Keratinocyte (primary cell): ENCODE measurements at regions of chr18 and their contacts with region 1.

Region 1: DNA sequence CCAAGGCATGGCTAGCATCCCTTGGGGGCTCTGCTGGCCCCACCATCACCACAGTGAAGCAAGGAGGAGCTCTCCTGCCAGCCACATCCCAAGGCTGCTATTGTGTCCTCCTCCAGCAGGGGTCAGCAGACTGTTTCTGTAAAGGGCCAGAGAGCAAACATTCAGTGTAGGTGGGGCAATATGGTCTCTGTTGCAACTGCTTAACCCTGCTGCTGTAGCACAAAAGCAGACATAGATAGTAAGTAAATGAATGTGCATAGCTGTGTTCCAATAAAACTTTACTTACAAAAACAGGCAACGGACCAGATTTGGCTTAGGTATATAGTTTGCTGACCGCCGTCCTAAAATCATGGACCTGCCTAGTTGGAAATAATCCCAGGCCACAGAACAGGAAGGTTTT is 36.4 kb upstream of the ZBTB7C start:
- DNase-seq: no peak
- H3K4me3 ChIP-seq: no peak overlapping the region
- H3K27ac ChIP-seq: no peak overlapping the region
- H3K4me1 ChIP-seq: no peaks in the 10 kb centered on the region
- H3K27me3 ChIP-seq: peaks cover 16% of the 10 kb centered on the region
- CTCF ChIP-seq: peak; percentile 96 to 98 (median 97)

Region 2: GRCh38 chr18:48230467-48231113 is 214.9 kb before region 1 on chr18:
- dilution Hi-C with region 1: loop called (anchors 25 kb)
- DNase-seq: no peak
- H3K4me3 ChIP-seq: no peak overlapping the region
- H3K27ac ChIP-seq: no peak overlapping the region
- H3K4me1 ChIP-seq: peaks cover 4% of the 10 kb centered on the region
- H3K27me3 ChIP-seq: peaks cover 3% of the 10 kb centered on the region
- CTCF ChIP-seq: peak; percentile 86 to 100 (median 89)